ENCODE measurements at regions of chr19 and their contacts with region 1.

Region 1: DNA sequence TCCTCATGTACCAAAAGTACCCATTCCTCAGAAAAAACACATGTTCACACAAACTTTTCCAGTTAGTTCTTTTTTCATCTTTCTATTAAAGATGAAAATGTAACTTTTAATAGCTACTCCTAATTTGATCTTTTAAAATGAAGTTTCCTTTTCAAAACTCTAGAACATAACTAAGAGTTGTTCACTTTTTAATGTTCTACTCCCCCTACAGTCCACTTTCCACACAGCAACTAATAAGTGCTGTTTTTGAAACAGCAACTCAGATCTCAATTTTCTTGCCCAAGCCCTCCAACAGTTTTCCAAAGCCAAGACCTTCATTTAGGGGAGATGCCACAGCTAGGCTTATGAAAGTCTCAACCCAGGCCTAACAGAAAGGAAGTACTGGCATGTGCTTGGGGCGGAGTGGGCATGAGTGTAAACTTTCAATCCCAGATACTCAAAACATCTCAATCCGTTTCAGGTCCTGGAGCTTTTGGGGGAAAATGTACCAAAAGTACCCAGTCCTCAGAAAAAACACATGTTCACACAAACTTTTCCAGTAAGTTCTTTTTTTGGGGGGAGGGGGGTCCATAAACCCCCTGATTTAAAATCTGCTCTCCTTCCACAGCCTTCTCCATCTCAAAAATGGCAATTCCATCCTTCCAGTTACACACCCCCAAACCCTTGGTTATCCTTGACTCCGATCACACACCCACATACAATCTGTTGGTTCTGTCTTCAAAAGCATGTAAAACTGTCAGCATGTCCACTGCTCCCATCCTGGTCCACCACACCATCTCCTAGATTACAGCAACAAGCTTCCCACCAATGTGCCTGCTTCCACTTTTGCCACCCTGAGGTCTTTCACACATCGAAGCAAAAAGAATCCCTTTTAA is 2.0 kb downstream of the FBL start:
- DNase-seq: peak; percentile 30

Region 2: GRCh38 chr19:39780894-39781293 is 63.3 kb before region 1 on chr19:
- in situ Hi-C with region 1: loop called (anchors 5 kb)
- DNase-seq: no peak

Region 3: GRCh38 chr19:39906820-39907611 is 62.9 kb after region 1 on chr19:
- in situ Hi-C with region 1: no loop called
- DNase-seq: no peak